ENCODE measurements at regions of chr6 and their contacts with region 1.

Region 1: GRCh38 chr6:27608916-27609883 is 136.3 kb upstream of the ZNF184 start:
- H3K4me3 ChIP-seq: no peak overlapping the region
- H3K27ac ChIP-seq: no peak overlapping the region
- H3K4me1 ChIP-seq: no peaks in the 10 kb centered on the region
- CTCF ChIP-seq: peak; percentile 55; the same call in 1 of the 2 replicates

Region 2: GRCh38 chr6:27624694-27625262 is 15.6 kb after region 1 on chr6:
- CTCF ChIA-PET with region 1: interaction called, 24 read pairs
- POLR2A ChIA-PET with region 1: interaction called, 6 read pairs
- H3K4me3 ChIP-seq: no peak overlapping the region
- H3K27ac ChIP-seq: no peak overlapping the region
- H3K4me1 ChIP-seq: no peaks in the 10 kb centered on the region
- CTCF ChIP-seq: no peak